PC-9 (cell line): ENCODE measurements at regions of chr5 and their contacts with region 1.

Region 1: GRCh38 chr5:154445422-154446182 is at the start of gene SAP30L:
- DNase-seq: peak; percentile 83 to 99
- H3K4me3 ChIP-seq: peak within 1 kb of the TSS; percentile 95
- H3K27ac ChIP-seq: no peak within 1 kb of the TSS
- H3K4me1 ChIP-seq: peaks cover 32% of the 10 kb centered on the region
- H3K27me3 ChIP-seq: no peaks in the 10 kb centered on the region
- CTCF ChIP-seq: no peak
- total RNA-seq, gene SAP30L: 42.8 and 53.0 TPM in 2 replicates

Region 2: DNA sequence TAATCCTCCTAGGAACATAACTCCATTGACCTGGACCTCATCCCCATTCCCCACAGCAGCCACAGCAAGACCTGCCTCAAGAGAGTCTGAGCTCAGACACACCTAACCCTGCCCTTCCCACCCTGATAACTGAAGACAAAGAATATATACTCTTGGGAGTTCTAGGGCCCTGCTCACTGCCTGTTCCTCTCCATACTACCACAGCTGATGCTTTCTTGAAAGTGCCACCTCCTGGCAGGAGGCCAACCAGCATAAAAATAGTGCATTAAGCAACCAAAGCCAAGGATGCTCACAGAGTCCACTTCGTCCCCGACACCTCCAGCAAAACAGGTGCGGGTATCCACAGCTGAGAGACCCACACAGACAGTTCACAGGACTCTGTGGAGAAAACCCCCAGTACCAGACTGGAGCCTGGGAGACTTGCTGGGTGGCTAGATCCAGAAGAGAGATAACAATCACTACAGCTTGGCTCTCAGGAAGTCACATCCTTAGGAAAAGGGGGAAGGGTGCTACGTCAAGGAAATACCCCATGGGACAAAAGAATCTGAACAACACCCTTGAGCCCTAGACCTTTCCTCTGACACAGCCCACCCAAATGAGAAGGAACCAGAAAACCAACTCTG is 430.4 kb before region 1 on chr5:
- CTCF ChIA-PET with region 1: no interaction called
- POLR2A ChIA-PET with region 1: interaction called, 13 read pairs
- intact Hi-C with region 1: no loop called
- DNase-seq: no peak
- H3K4me3 ChIP-seq: no peak overlapping the region
- H3K27ac ChIP-seq: no peak overlapping the region
- H3K4me1 ChIP-seq: no peaks in the 10 kb centered on the region
- H3K27me3 ChIP-seq: no peaks in the 10 kb centered on the region
- CTCF ChIP-seq: no peak

Region 3: DNA sequence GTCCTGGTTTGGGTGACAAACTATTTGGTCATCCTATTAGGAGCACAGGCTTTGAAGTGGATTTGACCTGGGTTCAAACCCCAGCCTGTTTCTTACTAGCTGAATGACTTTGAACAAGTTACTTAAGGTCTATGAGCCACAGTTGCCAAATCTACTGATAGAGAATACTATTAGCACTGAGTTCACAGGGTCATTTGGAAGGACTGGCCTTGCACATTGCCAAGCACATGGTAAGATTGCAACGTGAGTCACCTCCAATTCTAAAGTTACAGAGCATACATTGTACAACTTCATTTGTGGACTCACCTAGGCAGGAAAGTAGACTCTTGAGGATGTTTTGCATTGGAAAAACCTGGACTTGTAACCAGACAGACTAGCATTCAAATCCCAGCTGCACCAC is 367.9 kb before region 1 on chr5:
- CTCF ChIA-PET with region 1: no interaction called
- POLR2A ChIA-PET with region 1: no interaction called
- intact Hi-C with region 1: loop called (anchors 5 kb)
- DNase-seq: peak in 1 of 2 experiments; percentile 94
- H3K4me3 ChIP-seq: no peak overlapping the region
- H3K27ac ChIP-seq: peak overlapping the region; percentile 58
- H3K4me1 ChIP-seq: peaks cover 47% of the 10 kb centered on the region
- H3K27me3 ChIP-seq: no peaks in the 10 kb centered on the region
- CTCF ChIP-seq: no peak

Region 4: DNA sequence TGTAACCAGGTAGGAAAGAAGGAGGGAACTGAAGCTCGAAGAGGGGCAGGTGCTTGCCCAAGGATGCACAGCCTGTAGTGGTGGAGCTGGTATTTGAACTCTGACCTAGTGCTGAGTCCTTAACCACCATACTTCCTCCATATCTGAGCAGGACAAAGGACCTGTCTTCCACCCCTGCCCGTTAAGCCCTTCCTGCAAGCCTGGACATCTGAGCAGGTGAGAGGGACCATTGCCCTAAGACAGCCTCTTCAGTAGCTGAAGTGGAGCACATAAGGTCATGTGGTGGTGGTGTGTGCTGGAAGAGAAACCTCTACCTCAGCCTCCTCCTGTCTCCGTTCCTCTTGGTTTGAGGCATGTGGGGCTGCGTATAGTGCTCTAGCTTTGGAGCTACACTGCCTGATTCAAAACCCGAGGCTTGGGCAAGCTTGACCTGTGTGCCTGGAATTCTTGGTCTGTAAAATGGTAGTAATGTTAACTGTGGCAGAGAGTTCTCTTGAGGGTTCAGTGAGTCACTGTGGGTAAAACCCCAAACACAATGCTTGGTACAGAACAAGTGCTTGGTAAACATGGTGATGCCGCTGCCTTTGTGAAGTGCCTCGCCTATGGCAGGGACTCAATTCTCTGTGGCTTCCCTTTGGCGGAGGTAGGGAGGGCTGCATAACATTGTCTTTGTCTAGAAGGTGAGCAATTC is 247.7 kb before region 1 on chr5:
- CTCF ChIA-PET with region 1: no interaction called
- POLR2A ChIA-PET with region 1: no interaction called
- intact Hi-C with region 1: loop called (anchors 1 kb)
- DNase-seq: peak; percentile 81 to 91
- H3K4me3 ChIP-seq: no peak overlapping the region
- H3K27ac ChIP-seq: peak overlapping the region; percentile 66
- H3K4me1 ChIP-seq: peaks cover 68% of the 10 kb centered on the region
- H3K27me3 ChIP-seq: no peaks in the 10 kb centered on the region
- CTCF ChIP-seq: no peak

Region 5: GRCh38 chr5:154368041-154368800 is 77.4 kb before region 1 on chr5:
- CTCF ChIA-PET with region 1: no interaction called
- POLR2A ChIA-PET with region 1: no interaction called
- intact Hi-C with region 1: loop called (anchors 5 kb)
- DNase-seq: peak; percentile 76 to 96
- H3K4me3 ChIP-seq: peak overlapping the region; percentile 34; the same call in 1 of the 2 replicates
- H3K27ac ChIP-seq: peak overlapping the region; percentile 98
- H3K4me1 ChIP-seq: peaks cover 69% of the 10 kb centered on the region
- H3K27me3 ChIP-seq: no peaks in the 10 kb centered on the region
- CTCF ChIP-seq: no peak

Region 6: DNA sequence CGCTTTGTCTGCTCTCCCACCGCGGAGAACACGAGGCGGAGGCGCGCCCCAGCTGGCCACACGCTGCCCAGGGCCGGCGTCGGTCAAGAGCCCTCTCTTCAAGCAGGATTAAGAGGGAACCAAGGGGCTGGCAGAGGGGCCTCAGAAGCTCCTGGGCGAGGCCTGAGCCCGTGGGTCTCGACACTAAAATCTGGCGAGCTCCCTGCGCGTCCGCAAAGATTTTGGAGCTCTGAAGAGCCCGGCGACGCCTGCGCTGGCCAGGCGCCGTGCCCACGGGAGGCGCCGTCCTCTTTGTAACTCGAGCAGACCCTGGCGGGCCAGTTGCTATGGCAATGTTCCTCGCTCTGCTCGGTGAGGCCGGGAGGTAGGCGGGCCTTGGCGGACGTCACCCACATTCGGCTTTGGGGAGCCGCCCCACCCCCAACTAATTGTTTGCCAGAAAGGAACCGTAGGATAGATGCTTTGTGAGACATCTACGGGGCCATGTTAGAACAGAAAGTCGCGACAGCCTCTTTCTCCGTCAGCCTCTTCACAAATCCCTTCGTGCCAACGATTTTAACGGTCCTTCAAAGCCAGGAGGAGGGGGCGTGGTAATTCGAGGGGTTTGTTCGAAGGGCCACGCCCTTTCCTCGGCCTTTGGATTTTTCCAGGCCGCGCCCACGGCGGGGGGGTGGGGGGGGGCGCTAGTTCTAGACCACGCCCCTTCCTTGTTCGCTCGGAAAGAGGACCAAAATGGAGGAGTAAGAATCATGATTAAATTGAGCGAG is 412.1 kb after region 1 on chr5:
- CTCF ChIA-PET with region 1: no interaction called
- POLR2A ChIA-PET with region 1: no interaction called
- intact Hi-C with region 1: loop called (anchors 10 kb)
- DNase-seq: peak; percentile 88 to 94
- H3K4me3 ChIP-seq: peak overlapping the region; percentile 88
- H3K27ac ChIP-seq: peak overlapping the region; percentile 84
- H3K4me1 ChIP-seq: peaks cover 24% of the 10 kb centered on the region
- H3K27me3 ChIP-seq: no peaks in the 10 kb centered on the region
- CTCF ChIP-seq: no peak